T-cell (primary cell): ENCODE measurements at regions of chr11 and their contacts with region 1.

Region 1: DNA sequence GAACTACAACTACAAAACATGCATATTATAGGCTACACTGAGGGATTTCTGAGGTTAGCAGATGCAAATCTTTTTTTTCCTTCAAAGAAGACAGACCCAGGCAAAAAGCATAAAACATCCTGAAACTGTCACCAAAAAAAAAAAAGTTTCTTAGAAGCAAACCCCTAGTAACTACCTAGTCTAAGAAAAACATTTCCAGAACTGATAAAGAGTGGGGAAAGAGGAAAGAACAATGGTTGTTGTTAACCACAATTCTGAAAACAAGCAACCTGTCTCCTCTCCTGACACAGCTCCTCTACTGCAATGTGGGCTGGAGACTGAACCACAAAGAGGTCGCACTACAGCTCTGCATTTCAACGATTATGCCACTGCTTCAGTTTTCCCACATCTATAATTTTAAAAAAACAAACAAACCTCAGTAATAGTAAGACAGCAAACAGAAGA is 15.0 kb downstream of the DENND5A start:
- DNase-seq: peak in 27 of 35 experiments; percentile 14 to 75 (median 34)
- ATAC-seq: peak; percentile 84 to 92 (median 88)
- H3K4me3 ChIP-seq: no peak overlapping the region
- H3K4me3 Mint-ChIP-seq: peak overlapping the region; percentile 58 to 68 (median 63)
- H3K27ac ChIP-seq: peak overlapping the region; percentile 54
- H3K27ac Mint-ChIP-seq: peak overlapping the region; percentile 83 to 84
- H3K4me1 ChIP-seq: peaks cover 58 to 67% of the 10 kb centered on the region in 2 experiments
- H3K4me1 Mint-ChIP-seq: peaks cover 72 to 78% (median 76%) of the 10 kb centered on the region in 3 donors
- H3K27me3 ChIP-seq: no peaks in the 10 kb centered on the region
- H3K27me3 Mint-ChIP-seq: no peaks in the 10 kb centered on the region

Region 2: DNA sequence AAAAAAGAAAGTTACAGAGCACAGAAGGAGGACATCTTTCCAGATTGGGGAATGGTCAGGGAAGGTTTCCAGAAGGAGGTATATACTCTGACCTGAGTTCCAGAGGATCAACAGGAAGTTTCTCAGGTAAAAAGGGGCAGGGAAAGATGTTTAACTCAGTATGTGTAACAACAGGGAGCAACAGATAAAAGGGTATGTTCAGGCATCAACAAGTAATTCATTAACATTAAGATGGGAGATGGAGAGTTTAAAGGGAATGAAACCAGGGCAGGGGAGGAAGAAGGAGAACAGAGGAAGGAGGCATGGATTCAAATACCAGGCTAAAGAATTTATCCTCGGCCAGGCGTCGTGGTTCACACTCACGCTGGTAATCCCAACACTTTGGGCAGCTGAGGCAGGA is 17.5 kb after region 1 on chr11:
- CTCF ChIA-PET with region 1: no interaction called
- POLR2A ChIA-PET with region 1: no interaction called
- DNase-seq: no peak
- ATAC-seq: no peak
- H3K4me3 ChIP-seq: no peak overlapping the region
- H3K4me3 Mint-ChIP-seq: no peak overlapping the region
- H3K27ac ChIP-seq: no peak overlapping the region
- H3K27ac Mint-ChIP-seq: no peak overlapping the region
- H3K4me1 ChIP-seq: peaks cover 4 to 22% of the 10 kb centered on the region in 2 experiments
- H3K4me1 Mint-ChIP-seq: peaks cover 14 to 20% (median 15%) of the 10 kb centered on the region in 3 donors
- H3K27me3 ChIP-seq: peaks cover 0 to 14% of the 10 kb centered on the region in 2 experiments
- H3K27me3 Mint-ChIP-seq: peaks cover 0 to 2% of the 10 kb centered on the region in 2 donors

Region 3: GRCh38 chr11:9384535-9385303 is 134.6 kb after region 1 on chr11 and contains the start of gene IPO7:
- CTCF ChIA-PET with region 1: interaction called in 1 of 2 experiments, 8 read pairs
- POLR2A ChIA-PET with region 1: interaction called in 1 of 2 experiments, 12 read pairs
- DNase-seq: peak; percentile 68 to 91 (median 84)
- ATAC-seq: peak; percentile 98 to 99 (median 99)
- H3K4me3 ChIP-seq: peak within 1 kb of the TSS; percentile 76 to 82
- H3K4me3 Mint-ChIP-seq: peak within 1 kb of the TSS; percentile 93 to 96 (median 93)
- H3K27ac ChIP-seq: peak within 1 kb of the TSS; percentile 54
- H3K27ac Mint-ChIP-seq: peak within 1 kb of the TSS; percentile 84 to 90
- H3K4me1 ChIP-seq: peaks cover 15 to 25% of the 10 kb centered on the region in 2 experiments
- H3K4me1 Mint-ChIP-seq: peaks cover 40 to 42% (median 41%) of the 10 kb centered on the region in 3 donors
- H3K27me3 ChIP-seq: peaks cover 0 to 2% of the 10 kb centered on the region in 2 experiments
- H3K27me3 Mint-ChIP-seq: no peaks in the 10 kb centered on the region
- total RNA-seq, gene IPO7: 53.3 to 72.8 (median 61.2) TPM